Activated CD4-positive, alpha-beta T cell treated with anti-CD3 and anti-CD28 coated beads for 36 hours (primary cell): ENCODE measurements at regions of chr13 and their contacts with region 1.

Region 1: GRCh38 chr13:77026818-77027585 is at the start of gene FBXL3:
- DNase-seq: peak; percentile 89
- ATAC-seq: peak; percentile 59
- H3K4me3 Mint-ChIP-seq: peak within 1 kb of the TSS; percentile 92
- H3K27ac Mint-ChIP-seq: peak within 1 kb of the TSS; percentile 96
- H3K4me1 Mint-ChIP-seq: peaks cover 47% of the 10 kb centered on the region
- H3K27me3 Mint-ChIP-seq: peaks cover 2% of the 10 kb centered on the region
- total RNA-seq, gene FBXL3: 28.4 to 31.6 TPM

Region 2: GRCh38 chr13:76991796-76992547 is 35.0 kb before region 1 on chr13 and contains the start of gene CLN5:
- CTCF ChIA-PET with region 1: interaction called, 4 read pairs
- POLR2A ChIA-PET with region 1: interaction called, 10 read pairs
- intact Hi-C with region 1: loop called (anchors 1 kb)
- DNase-seq: peak; percentile 97
- ATAC-seq: peak; percentile 93
- H3K4me3 Mint-ChIP-seq: peak within 1 kb of the TSS; percentile 97
- H3K27ac Mint-ChIP-seq: peak within 1 kb of the TSS; percentile 99
- H3K4me1 Mint-ChIP-seq: peaks cover 36% of the 10 kb centered on the region
- H3K27me3 Mint-ChIP-seq: peaks cover 3% of the 10 kb centered on the region
- total RNA-seq, gene CLN5: 14.5 to 14.9 TPM

Region 3: DNA sequence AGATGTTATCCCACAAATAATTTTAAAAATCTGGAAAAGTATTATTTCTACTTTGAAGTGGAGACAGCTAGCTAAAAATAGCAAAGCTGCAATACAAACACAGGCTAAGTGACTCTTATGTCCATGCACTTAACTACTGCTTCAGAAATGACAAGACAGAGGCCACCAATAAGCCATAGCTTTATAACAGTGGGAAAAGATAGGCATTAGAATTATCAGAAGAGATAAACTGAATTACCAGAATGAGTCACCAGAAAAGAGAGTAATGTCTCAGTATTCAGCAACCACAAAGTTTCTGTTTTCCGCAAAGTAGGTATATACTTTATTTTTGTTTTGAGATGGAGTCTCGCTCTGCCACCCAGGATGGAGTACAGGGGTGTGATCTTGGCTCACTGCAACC is 18.0 kb before region 1 on chr13:
- CTCF ChIA-PET with region 1: interaction called, 7 read pairs
- POLR2A ChIA-PET with region 1: no interaction called
- intact Hi-C with region 1: loop called in 1 of 2 experiments (anchors 2 kb)
- DNase-seq: peak; percentile 19
- ATAC-seq: peak; percentile 81
- H3K4me3 Mint-ChIP-seq: no peak overlapping the region
- H3K27ac Mint-ChIP-seq: peak overlapping the region; percentile 74
- H3K4me1 Mint-ChIP-seq: peaks cover 39% of the 10 kb centered on the region
- H3K27me3 Mint-ChIP-seq: no peaks in the 10 kb centered on the region

Region 4: DNA sequence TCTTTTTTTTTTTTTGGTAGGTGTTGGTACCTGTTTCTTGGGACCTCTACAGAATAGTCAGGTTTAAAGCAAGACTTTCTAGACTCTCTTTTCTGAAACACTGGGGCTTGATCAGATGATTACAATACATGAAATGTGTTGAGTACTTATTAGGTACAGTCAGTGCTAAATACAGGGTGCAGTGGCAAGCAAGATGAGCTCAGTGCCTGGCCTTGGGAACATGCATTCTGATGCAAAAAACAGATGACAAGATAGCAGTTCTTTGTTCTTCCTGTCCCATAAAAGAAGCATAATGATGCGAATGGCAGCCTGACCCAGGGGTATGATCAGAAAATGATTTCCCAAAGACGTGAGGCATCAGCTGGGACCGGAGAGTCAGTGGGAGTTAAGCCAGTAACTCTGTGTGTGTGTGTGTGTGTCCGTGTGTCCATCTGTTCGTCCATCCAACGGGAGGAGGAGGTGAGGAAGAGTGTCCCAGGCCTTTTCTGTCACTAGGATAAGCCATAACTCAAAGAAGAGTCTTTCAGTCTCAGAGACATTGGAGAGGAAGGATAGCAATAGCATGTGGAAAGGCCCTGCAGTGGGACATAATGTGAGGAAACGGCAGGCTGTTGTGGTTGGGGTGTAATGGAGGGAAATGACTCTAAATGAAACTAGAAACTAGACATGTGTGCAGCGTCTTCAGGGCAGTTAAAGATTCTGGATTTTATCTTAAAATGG is 702.7 kb after region 1 on chr13:
- CTCF ChIA-PET with region 1: no interaction called
- POLR2A ChIA-PET with region 1: no interaction called
- intact Hi-C with region 1: loop called in 1 of 2 experiments (anchors 10 kb)
- DNase-seq: peak; percentile 62
- ATAC-seq: peak; percentile 96
- H3K4me3 Mint-ChIP-seq: peak overlapping the region; percentile 21
- H3K27ac Mint-ChIP-seq: peak overlapping the region; percentile 42
- H3K4me1 Mint-ChIP-seq: peaks cover 34% of the 10 kb centered on the region
- H3K27me3 Mint-ChIP-seq: no peaks in the 10 kb centered on the region